Activated CD4-positive, alpha-beta T cell treated with anti-CD3 and anti-CD28 coated beads for 36 hours (primary cell): ENCODE measurements at regions of chr6 and their contacts with region 1.

Region 1: DNA sequence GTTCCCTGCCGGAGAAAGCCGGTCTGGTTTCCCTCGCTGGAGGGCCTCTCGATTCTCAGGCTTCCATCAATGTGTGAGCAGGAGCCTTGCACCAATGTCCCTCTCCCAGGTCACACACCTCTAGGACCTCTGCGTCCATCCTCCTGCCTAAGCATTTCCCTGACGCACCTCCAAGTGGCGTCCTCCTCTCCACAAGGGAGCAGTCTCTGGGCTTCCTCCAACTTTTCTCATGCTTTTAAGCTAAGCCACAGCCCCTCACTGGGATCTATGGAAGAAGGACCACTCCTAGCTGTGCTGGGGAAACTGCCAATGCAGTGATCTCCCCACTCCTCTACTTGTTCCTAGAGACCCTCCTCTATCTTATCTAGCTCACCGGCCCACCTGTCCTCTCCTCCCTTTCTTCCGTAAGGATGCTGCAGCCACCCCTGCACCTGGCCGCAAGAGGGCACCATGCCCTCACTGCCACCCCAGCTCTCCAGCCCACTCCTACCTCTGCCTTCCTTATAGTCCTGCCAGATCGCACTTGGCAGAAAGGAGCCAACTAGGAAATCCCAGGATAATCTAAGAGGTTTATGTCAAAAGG is 258.7 kb downstream of the LRFN2 start:
- DNase-seq: peak; percentile 69
- ATAC-seq: peak; percentile 53
- H3K4me3 Mint-ChIP-seq: no peak overlapping the region
- H3K27ac Mint-ChIP-seq: no peak overlapping the region
- H3K4me1 Mint-ChIP-seq: peaks cover 3% of the 10 kb centered on the region
- H3K27me3 Mint-ChIP-seq: peaks cover 7% of the 10 kb centered on the region

Region 2: GRCh38 chr6:40378071-40378724 is 49.7 kb after region 1 on chr6:
- CTCF ChIA-PET with region 1: no interaction called
- POLR2A ChIA-PET with region 1: no interaction called
- intact Hi-C with region 1: no loop called
- DNase-seq: no peak
- ATAC-seq: no peak
- H3K4me3 Mint-ChIP-seq: no peak overlapping the region
- H3K27ac Mint-ChIP-seq: no peak overlapping the region
- H3K4me1 Mint-ChIP-seq: no peaks in the 10 kb centered on the region
- H3K27me3 Mint-ChIP-seq: no peaks in the 10 kb centered on the region

Region 3: DNA sequence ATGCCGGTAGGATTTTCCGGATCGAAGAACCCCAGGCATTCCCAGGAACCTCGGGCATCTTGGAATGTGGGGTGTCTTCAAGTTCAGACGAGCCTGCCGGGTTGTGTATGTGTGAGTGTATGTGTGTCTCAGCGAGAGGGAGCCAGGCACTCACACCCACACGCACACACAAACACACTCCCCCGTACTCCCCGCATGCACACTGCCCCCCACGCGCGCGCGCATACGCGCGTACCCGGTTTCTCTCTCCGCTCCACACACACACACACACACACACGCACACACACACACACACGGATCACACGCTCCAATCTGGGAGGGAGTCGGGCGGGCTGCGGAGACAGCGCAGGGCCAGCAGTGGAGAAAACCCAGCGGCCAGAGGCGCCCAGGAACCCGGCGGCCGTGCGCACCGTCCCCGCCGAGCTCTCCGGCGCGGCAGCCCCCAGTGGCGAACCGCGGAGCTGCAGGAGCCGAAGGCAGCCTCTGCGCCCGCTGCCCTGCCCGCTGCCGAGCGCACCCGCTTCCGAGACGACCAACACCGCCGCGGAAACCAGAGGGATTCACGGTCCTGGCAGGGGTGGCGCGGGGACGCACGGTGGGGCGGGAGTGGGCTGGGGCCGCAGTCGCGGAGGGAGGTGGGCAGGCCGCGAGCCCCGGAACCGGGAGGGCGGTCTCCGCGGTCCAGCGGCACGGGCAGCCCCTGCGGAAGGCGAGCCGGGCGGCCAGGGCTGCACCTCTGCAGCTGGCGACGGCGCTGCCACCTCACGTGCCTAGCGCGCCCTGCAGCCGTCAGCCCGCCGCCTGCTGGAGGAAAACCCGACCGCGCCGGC is 259.0 kb after region 1 on chr6 and contains the start of gene LRFN2:
- CTCF ChIA-PET with region 1: interaction called, 5 read pairs
- POLR2A ChIA-PET with region 1: no interaction called
- intact Hi-C with region 1: loop called (anchors 1 to 2 kb)
- DNase-seq: peak; percentile 85
- ATAC-seq: peak; percentile 96
- H3K4me3 Mint-ChIP-seq: peak within 1 kb of the TSS; percentile 74
- H3K27ac Mint-ChIP-seq: no peak within 1 kb of the TSS
- H3K4me1 Mint-ChIP-seq: peaks cover 8% of the 10 kb centered on the region
- H3K27me3 Mint-ChIP-seq: peaks cover 36% of the 10 kb centered on the region
- total RNA-seq, gene LRFN2: not detected

Region 4: DNA sequence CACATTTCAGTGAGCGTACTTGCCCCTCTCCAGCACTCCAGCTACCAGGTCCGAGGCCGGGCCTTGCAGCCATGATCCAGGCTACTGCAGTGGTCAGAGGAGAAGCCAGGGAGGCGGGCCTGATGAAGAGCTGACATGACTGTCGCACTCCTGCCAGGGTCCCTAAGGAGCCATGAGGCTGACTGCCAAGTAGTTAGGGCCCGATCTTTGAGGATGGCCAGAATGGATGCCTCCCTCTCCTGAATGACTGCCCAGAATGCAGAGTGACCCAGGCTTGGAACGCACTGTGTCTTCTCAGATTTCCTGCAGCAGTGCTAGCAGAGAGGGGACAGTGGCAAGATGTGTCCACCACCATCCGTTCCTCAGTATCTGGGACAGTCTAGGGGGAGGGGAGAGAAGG is 283.4 kb after region 1 on chr6:
- CTCF ChIA-PET with region 1: no interaction called
- POLR2A ChIA-PET with region 1: no interaction called
- intact Hi-C with region 1: no loop called
- DNase-seq: no peak
- ATAC-seq: no peak
- H3K4me3 Mint-ChIP-seq: no peak overlapping the region
- H3K27ac Mint-ChIP-seq: no peak overlapping the region
- H3K4me1 Mint-ChIP-seq: no peaks in the 10 kb centered on the region
- H3K27me3 Mint-ChIP-seq: peaks cover 11% of the 10 kb centered on the region

Region 5: GRCh38 chr6:40819182-40819834 is 490.8 kb after region 1 on chr6:
- CTCF ChIA-PET with region 1: no interaction called
- POLR2A ChIA-PET with region 1: no interaction called
- intact Hi-C with region 1: loop called in 1 of 2 experiments (anchors 1 kb)
- DNase-seq: peak; percentile 49
- ATAC-seq: peak; percentile 51
- H3K4me3 Mint-ChIP-seq: no peak overlapping the region
- H3K27ac Mint-ChIP-seq: peak overlapping the region; percentile 74
- H3K4me1 Mint-ChIP-seq: no peaks in the 10 kb centered on the region
- H3K27me3 Mint-ChIP-seq: peaks cover 4% of the 10 kb centered on the region

Region 6: GRCh38 chr6:40845553-40845952 is 517.1 kb after region 1 on chr6:
- CTCF ChIA-PET with region 1: interaction called, 4 read pairs
- POLR2A ChIA-PET with region 1: no interaction called
- intact Hi-C with region 1: loop called in 1 of 2 experiments (anchors 2 kb)
- DNase-seq: peak; percentile 55
- ATAC-seq: no peak
- H3K4me3 Mint-ChIP-seq: no peak overlapping the region
- H3K27ac Mint-ChIP-seq: no peak overlapping the region
- H3K4me1 Mint-ChIP-seq: no peaks in the 10 kb centered on the region
- H3K27me3 Mint-ChIP-seq: peaks cover 21% of the 10 kb centered on the region

Region 7: DNA sequence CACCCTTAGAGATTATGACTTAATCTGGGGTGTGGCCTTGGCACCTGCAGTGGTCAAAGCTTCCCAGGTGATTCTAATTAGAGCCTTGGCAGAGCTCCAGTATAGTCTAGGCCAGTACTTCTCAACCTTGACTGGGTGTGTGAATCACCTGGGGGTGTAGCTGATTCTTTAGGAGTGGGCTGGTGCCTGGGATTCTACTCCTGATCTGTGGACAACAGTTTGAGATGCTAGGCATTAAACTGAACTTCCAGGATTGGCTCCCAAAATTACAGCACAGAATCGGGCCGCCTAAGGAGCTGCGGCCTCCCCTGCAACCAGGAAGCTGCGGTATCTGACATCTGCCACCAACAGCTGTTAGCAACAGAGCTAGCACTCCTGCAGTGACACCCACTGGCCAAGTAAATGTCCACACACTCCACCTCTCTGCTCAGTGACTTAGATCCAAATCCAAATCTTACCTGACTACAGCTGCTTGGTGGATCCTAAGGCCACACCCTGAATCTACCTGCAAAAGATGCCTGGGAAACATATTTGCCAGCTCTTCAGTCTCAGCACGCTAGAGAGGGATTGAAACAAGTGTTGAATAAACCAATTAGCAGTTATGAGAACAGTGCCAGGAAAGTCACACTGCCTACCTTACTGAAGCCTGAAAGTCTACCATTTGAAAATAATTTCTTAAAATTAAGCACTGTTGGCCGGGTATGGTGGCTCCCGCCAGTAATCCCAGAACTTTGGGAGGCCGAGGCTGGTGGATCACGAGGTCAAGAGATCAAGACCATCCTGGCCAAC is 583.9 kb after region 1 on chr6:
- CTCF ChIA-PET with region 1: interaction called, 4 read pairs
- POLR2A ChIA-PET with region 1: no interaction called
- intact Hi-C with region 1: loop called in 1 of 2 experiments (anchors 2 kb)
- DNase-seq: peak; percentile 64
- ATAC-seq: peak; percentile 82
- H3K4me3 Mint-ChIP-seq: no peak overlapping the region
- H3K27ac Mint-ChIP-seq: no peak overlapping the region
- H3K4me1 Mint-ChIP-seq: peaks cover 7% of the 10 kb centered on the region
- H3K27me3 Mint-ChIP-seq: peaks cover 11% of the 10 kb centered on the region

Region 8: GRCh38 chr6:41027799-41028628 is 699.5 kb after region 1 on chr6:
- CTCF ChIA-PET with region 1: no interaction called
- POLR2A ChIA-PET with region 1: no interaction called
- intact Hi-C with region 1: loop called in 1 of 2 experiments (anchors 1 kb)
- DNase-seq: peak; percentile 89
- ATAC-seq: peak; percentile 88
- H3K4me3 Mint-ChIP-seq: peak overlapping the region; percentile 73
- H3K27ac Mint-ChIP-seq: peak overlapping the region; percentile 77
- H3K4me1 Mint-ChIP-seq: peaks cover 17% of the 10 kb centered on the region
- H3K27me3 Mint-ChIP-seq: no peaks in the 10 kb centered on the region